Tibial artery (tissue), 4 donors: ENCODE measurements at regions of chr11 and their contacts with region 1.

Region 1: GRCh38 chr11:130314750-130315285 is at the start of gene ZBTB44:
- DNase-seq: peak; percentile 93 to 96
- H3K4me3 ChIP-seq: peak within 1 kb of the TSS; percentile 72 to 87
- H3K27ac ChIP-seq: peak within 1 kb of the TSS; percentile 90 to 91
- H3K4me1 ChIP-seq: peaks cover 0 to 44% (median 22%) of the 10 kb centered on the region in 4 donors
- H3K27me3 ChIP-seq: no peaks in the 10 kb centered on the region
- CTCF ChIP-seq: no peak

Region 2: DNA sequence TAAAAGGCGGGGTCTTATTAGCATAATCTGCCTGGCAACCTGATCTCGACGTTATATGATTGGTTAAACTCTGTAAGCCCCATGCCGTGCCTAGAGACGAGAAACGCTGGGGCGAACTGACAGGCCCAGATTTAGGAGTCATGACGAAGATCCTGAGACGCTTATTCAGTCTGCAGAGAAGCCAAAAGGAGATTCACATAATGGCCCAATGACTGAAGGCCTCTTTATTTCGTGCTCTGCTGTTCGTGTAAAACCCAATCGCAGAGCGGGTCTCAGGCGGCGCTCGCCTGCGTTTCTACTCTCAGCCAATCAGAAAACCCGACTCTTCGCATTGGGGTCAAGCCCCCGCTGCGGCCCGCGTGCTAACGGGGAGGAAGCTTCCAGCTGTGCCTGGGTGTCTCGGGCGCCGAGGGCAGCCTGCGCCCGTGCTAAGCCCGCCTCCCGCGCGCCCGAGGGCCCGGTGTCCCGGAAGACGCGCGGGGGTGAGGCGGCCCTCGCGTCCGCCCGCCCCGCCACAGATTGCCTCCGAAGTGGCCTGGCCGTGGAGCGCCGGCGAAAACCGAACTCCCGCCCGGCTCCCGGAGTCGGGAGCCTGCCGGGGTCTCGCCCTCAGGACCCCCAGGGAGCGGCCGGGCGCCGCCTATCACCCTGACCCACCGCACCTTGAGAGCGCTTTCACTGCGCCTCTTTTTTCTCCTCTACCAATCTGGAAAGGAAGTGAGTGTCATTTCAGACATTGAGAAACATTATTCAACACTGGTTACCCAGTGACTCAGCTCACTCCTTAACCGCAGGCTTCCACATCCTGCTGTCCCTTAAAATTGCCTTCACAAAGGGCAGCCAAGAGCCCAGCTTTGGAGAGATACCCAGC is 311.7 kb before region 1 on chr11:
- intact Hi-C with region 1: loop called (anchors 10 kb)
- DNase-seq: peak; percentile 93 to 98
- H3K4me3 ChIP-seq: peak overlapping the region; percentile 91 to 92
- H3K27ac ChIP-seq: peak overlapping the region; percentile 98 to 100
- H3K4me1 ChIP-seq: peaks cover 0 to 24% (median 18%) of the 10 kb centered on the region in 4 donors
- H3K27me3 ChIP-seq: no peaks in the 10 kb centered on the region
- CTCF ChIP-seq: peak in 1 of 2 experiments; percentile 5

Region 3: DNA sequence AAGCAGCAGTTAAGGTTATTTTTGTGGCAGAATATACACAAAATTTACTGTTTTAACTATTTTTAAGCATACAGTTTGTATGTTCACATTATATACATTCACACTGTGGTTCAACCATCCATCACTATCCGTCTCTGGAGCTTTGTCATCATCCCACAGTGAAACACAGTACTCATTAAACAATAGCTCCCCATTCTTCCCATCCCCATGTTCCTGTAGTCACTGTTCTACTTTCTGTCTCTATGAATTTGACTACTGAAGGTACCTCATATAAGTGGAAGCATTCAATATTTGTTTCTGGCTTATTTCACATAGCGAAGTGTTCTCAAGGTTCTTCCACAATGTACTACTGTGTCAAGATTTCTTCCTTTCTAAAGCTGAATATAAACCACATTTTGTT is 32.7 kb before region 1 on chr11:
- intact Hi-C with region 1: no loop called
- DNase-seq: no peak
- H3K4me3 ChIP-seq: no peak overlapping the region
- H3K27ac ChIP-seq: no peak overlapping the region
- H3K4me1 ChIP-seq: no peaks in the 10 kb centered on the region
- H3K27me3 ChIP-seq: no peaks in the 10 kb centered on the region
- CTCF ChIP-seq: no peak

Region 4: GRCh38 chr11:130827451-130828377 is 512.9 kb after region 1 on chr11:
- intact Hi-C with region 1: loop called (anchors 10 kb)
- DNase-seq: peak; percentile 66 to 90
- H3K4me3 ChIP-seq: no peak overlapping the region
- H3K27ac ChIP-seq: peak overlapping the region; percentile 63 to 77
- H3K4me1 ChIP-seq: peaks cover 0 to 55% (median 43%) of the 10 kb centered on the region in 4 donors
- H3K27me3 ChIP-seq: no peaks in the 10 kb centered on the region
- CTCF ChIP-seq: peak; percentile 56 to 59

Region 5: GRCh38 chr11:130894322-130895025 is 579.7 kb after region 1 on chr11:
- intact Hi-C with region 1: loop called (anchors 10 kb)
- DNase-seq: peak; percentile 74 to 86
- H3K4me3 ChIP-seq: no peak overlapping the region
- H3K27ac ChIP-seq: peak overlapping the region; percentile 82 to 86
- H3K4me1 ChIP-seq: peaks cover 3 to 80% (median 48%) of the 10 kb centered on the region in 4 donors
- H3K27me3 ChIP-seq: no peaks in the 10 kb centered on the region
- CTCF ChIP-seq: peak; percentile 90 to 94